ENCODE measurements at regions of chr11 and their contacts with region 1.

Region 1: DNA sequence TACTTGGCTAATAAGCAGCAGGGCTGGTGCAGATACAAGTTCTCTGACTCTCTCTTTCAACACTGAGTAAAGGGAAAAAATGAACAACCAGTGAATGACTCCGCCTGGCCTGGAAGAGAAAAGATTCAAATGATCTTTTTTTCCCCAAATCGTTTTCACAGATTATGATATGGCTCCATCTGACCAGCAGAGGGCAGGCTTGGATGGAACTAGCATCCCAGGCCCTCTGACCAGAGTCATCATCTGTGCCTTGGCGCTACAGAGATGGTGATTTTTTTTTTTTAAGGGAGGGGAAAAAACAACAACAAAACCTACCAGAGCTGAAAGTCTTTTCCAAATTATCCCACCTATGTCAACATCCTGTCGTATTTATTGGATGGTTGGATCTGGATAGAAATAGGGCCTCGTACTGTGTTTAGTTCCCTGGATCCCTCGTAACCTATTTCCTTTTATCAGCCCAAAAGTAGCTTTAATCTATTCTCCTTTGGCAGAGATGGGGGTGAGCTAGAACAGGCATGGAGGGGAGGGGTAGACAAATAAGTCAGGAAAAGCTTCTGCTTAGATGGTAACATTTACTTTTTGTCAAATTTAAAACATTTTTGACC is 69.7 kb downstream of the PRSS23 start:
- DNase-seq: peak; percentile 83
- H3K4me3 Mint-ChIP-seq: no peak overlapping the region
- H3K27ac Mint-ChIP-seq: no peak overlapping the region
- H3K4me1 Mint-ChIP-seq: no peaks in the 10 kb centered on the region
- H3K27me3 Mint-ChIP-seq: peaks cover 12% of the 10 kb centered on the region

Region 2: DNA sequence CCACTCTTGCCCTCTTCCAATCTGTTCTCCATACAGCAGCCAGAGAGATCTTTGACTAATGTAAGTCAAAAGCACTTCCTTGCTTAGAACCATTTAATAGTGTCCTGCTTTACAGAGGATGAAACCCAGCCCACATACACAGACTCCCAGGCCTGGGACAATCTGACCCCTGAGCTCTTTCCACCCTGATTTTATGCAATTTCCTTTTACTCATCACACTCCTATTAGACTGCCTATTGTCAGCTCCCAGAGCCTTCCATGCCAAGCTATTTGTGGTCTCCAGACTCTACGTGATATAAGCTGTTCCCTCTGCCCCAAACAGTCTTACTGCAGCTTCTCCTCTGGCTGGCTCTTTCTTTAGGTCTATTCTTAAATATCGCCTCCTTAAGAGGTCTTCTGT is 225.8 kb before region 1 on chr11:
- intact Hi-C with region 1: no loop called
- DNase-seq: no peak
- H3K4me3 Mint-ChIP-seq: no peak overlapping the region
- H3K27ac Mint-ChIP-seq: no peak overlapping the region
- H3K4me1 Mint-ChIP-seq: no peaks in the 10 kb centered on the region
- H3K27me3 Mint-ChIP-seq: peaks cover 29% of the 10 kb centered on the region

Region 3: GRCh38 chr11:86919557-86920210 is 49.6 kb after region 1 on chr11:
- intact Hi-C with region 1: loop called (anchors 1 kb)
- DNase-seq: peak; percentile 72
- H3K4me3 Mint-ChIP-seq: no peak overlapping the region
- H3K27ac Mint-ChIP-seq: no peak overlapping the region
- H3K4me1 Mint-ChIP-seq: peaks cover 2% of the 10 kb centered on the region
- H3K27me3 Mint-ChIP-seq: peaks cover 9% of the 10 kb centered on the region